Activated CD4-positive, alpha-beta T cell treated with anti-CD3 and anti-CD28 coated beads for 36 hours (primary cell): ENCODE measurements at regions of chr11 and their contacts with region 1.

Region 1: DNA sequence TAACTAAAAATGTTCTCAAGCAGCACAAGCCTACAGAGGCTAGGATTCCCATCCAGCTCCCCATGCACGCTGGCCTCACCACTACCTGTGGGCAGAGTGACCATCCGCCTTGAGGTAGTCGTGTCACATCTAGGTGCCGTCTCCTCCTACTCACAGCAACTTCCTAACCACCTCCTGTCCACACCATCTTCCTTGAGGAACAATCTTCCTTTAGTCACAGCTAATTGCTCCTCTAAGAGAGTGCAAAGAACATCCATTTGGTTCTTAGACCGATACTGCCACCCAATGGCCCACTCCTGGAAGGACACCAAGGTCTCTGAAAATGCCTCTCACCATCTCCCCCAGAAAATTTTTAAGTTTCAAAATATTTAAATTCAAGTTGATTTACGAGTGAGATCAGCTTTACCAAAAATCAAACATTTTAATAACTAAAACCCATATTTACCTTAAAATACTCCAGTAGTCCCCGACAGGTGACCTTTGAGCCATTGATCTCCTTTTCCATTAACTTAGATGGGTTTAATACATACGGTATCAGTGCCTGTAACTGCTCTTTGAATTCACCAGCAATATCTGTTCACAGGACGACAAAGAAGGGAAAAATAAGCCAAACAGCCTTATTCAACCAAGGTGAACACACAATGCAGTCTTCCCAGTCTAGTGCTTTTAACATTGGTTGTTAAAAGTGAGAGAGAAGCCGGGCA is 21.7 kb upstream of the PLAAT3 start:
- DNase-seq: peak; percentile 79
- ATAC-seq: peak; percentile 85
- H3K4me3 Mint-ChIP-seq: no peak overlapping the region
- H3K27ac Mint-ChIP-seq: no peak overlapping the region
- H3K4me1 Mint-ChIP-seq: peaks cover 12% of the 10 kb centered on the region
- H3K27me3 Mint-ChIP-seq: no peaks in the 10 kb centered on the region

Region 2: GRCh38 chr11:63042596-63042995 is 593.3 kb before region 1 on chr11:
- CTCF ChIA-PET with region 1: no interaction called
- POLR2A ChIA-PET with region 1: no interaction called
- intact Hi-C with region 1: loop called (anchors 5 to 10 kb)
- DNase-seq: no peak
- ATAC-seq: no peak
- H3K4me3 Mint-ChIP-seq: no peak overlapping the region
- H3K27ac Mint-ChIP-seq: no peak overlapping the region
- H3K4me1 Mint-ChIP-seq: no peaks in the 10 kb centered on the region
- H3K27me3 Mint-ChIP-seq: peaks cover 19% of the 10 kb centered on the region

Region 3: DNA sequence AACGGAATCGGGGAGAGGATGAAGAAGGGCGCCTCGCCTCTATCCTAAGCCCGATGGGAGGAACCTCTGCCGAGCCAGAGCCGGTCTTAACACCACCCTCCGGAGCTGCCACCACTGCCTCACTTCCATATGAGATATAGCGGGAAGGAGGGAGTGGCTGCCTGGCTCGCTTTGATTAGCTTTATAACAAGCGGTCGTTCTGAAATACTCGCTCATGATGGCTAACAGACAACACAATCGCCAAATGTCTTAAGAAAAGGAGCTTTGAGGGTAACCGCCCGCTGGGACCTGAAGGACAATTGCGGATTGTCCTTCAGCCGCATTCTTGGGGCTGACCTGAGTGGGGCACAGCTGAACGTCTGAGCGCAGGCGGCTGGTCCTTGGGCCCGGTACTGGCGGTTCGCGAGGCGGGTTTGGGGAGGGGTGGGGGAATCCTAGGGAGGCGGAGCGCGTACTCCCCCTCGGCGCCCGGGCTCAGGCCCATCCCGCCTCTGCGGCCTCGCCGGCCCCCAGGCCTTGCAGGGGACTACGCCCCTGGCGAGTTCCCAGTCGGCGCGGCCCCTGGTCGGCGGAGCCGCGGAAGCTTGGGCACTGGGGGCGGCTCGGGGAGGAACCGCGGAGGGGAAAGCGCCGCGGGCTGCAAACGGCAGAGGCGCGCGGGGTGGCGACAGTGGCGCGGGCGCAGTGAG is 145.2 kb before region 1 on chr11 and contains the start of gene PLAAT5:
- CTCF ChIA-PET with region 1: interaction called, 12 read pairs
- POLR2A ChIA-PET with region 1: interaction called, 4 read pairs
- intact Hi-C with region 1: no loop called
- DNase-seq: peak; percentile 32
- ATAC-seq: peak; percentile 39
- H3K4me3 Mint-ChIP-seq: peak within 1 kb of the TSS; percentile 62
- H3K27ac Mint-ChIP-seq: no peak within 1 kb of the TSS
- H3K4me1 Mint-ChIP-seq: peaks cover 11% of the 10 kb centered on the region
- H3K27me3 Mint-ChIP-seq: peaks cover 22% of the 10 kb centered on the region
- total RNA-seq, gene PLAAT5: 0.07 TPM in 1 of 2 experiments, not detected in the other

Region 4: GRCh38 chr11:63518548-63518947 is 117.4 kb before region 1 on chr11:
- CTCF ChIA-PET with region 1: no interaction called
- POLR2A ChIA-PET with region 1: no interaction called
- intact Hi-C with region 1: no loop called
- DNase-seq: no peak
- ATAC-seq: no peak
- H3K4me3 Mint-ChIP-seq: no peak overlapping the region
- H3K27ac Mint-ChIP-seq: no peak overlapping the region
- H3K4me1 Mint-ChIP-seq: peaks cover 7% of the 10 kb centered on the region
- H3K27me3 Mint-ChIP-seq: peaks cover under 1% of the 10 kb centered on the region

Region 5: DNA sequence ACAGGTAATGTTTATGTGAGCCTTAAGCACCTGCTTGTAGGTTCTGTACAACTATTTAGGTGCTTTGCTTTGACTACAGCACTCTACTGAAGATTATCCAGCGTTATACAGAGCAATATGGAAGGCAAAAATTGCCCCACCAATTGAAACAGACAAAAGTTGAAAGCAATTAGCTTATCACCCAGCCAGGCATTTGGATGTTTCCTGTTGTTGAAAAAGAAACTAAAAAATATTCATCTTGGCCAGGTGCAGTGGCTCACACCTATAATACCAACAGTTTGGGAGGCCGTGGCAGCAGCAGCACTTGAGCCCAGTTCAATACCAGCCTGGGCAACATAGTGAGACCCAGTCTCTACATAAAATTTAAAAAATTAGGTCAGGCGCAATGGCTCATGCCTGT is 16.8 kb after region 1 on chr11:
- CTCF ChIA-PET with region 1: interaction called, 12 read pairs
- POLR2A ChIA-PET with region 1: no interaction called
- intact Hi-C with region 1: no loop called
- DNase-seq: no peak
- ATAC-seq: no peak
- H3K4me3 Mint-ChIP-seq: no peak overlapping the region
- H3K27ac Mint-ChIP-seq: no peak overlapping the region
- H3K4me1 Mint-ChIP-seq: peaks cover 6% of the 10 kb centered on the region
- H3K27me3 Mint-ChIP-seq: no peaks in the 10 kb centered on the region

Region 6: GRCh38 chr11:64216879-64217278 is 581.0 kb after region 1 on chr11:
- CTCF ChIA-PET with region 1: no interaction called
- POLR2A ChIA-PET with region 1: no interaction called
- intact Hi-C with region 1: no loop called
- DNase-seq: no peak
- ATAC-seq: no peak
- H3K4me3 Mint-ChIP-seq: no peak overlapping the region
- H3K27ac Mint-ChIP-seq: no peak overlapping the region
- H3K4me1 Mint-ChIP-seq: peaks cover 10% of the 10 kb centered on the region
- H3K27me3 Mint-ChIP-seq: no peaks in the 10 kb centered on the region